ENCODE measurements at regions of chr21 and their contacts with region 1.

Region 1: DNA sequence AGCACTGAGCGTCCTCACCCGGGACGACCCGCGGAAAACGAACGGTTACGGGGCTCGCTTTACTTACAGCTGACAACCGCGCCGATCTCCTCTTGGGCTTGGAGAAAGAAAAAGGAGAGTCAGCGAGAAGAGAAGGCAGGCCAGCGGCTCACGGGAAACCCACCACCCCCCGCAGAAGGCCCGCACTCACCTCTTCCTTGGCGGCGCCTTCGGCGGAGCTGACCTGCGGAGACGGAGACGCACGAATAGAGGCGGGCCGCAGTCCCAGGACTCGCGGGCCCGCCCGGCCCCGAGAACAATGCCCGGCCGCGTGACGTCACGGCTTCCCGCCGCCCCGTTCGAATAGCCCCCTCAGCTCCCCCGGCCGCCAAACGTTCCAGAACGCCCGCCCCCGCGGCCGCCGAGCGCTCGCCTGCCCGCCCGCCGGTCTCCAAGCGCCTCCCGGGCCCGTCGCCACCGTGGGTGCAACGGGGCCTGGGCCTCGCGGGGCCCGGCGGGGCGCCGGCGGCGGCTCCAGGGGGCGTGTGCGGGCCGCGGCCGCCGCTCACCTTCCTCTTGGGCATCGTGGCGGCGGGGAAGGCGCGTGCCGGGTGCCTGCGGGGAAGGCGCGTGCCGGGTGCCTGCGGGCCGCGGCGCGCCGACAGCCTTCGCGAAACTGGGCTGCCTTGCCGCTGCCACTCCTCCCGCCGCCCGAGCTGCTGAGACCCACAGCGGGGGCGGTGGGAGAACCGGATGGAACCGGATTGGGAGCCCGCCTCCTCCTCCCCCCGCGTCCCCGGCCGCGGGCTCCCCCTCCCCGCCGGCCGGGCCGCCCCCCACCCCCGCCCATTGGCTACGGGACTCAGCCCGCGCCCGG is at the start of gene HMGN1:
- DNase-seq: peak; percentile 32 to 92 (median 84)
- ATAC-seq: peak; percentile 35 to 68 (median 68)
- H3K4me3 ChIP-seq: peak within 1 kb of the TSS; percentile 68 to 99
- H3K4me3 Mint-ChIP-seq: peak within 1 kb of the TSS; percentile 84 to 96 (median 94)
- H3K27ac ChIP-seq: peak within 1 kb of the TSS; percentile 69
- H3K27ac Mint-ChIP-seq: peak within 1 kb of the TSS; percentile 98
- H3K4me1 ChIP-seq: peaks cover 12 to 23% of the 10 kb centered on the region in 2 experiments
- H3K4me1 Mint-ChIP-seq: peaks cover 38 to 46% (median 43%) of the 10 kb centered on the region in 3 donors
- H3K27me3 ChIP-seq: no peaks in the 10 kb centered on the region
- H3K27me3 Mint-ChIP-seq: peaks cover 0 to 2% of the 10 kb centered on the region in 2 donors
- total RNA-seq, gene HMGN1: 206 to 254 (median 239) TPM

Region 2: GRCh38 chr21:39071623-39072214 is 276.9 kb before region 1 on chr21:
- CTCF ChIA-PET with region 1: no interaction called
- POLR2A ChIA-PET with region 1: no interaction called
- DNase-seq: no peak
- ATAC-seq: no peak
- H3K4me3 ChIP-seq: no peak overlapping the region
- H3K4me3 Mint-ChIP-seq: no peak overlapping the region
- H3K27ac ChIP-seq: no peak overlapping the region
- H3K27ac Mint-ChIP-seq: no peak overlapping the region
- H3K4me1 ChIP-seq: no peaks in the 10 kb centered on the region
- H3K4me1 Mint-ChIP-seq: no peaks in the 10 kb centered on the region
- H3K27me3 ChIP-seq: no peaks in the 10 kb centered on the region
- H3K27me3 Mint-ChIP-seq: peaks cover 1 to 3% of the 10 kb centered on the region in 2 donors

Region 3: DNA sequence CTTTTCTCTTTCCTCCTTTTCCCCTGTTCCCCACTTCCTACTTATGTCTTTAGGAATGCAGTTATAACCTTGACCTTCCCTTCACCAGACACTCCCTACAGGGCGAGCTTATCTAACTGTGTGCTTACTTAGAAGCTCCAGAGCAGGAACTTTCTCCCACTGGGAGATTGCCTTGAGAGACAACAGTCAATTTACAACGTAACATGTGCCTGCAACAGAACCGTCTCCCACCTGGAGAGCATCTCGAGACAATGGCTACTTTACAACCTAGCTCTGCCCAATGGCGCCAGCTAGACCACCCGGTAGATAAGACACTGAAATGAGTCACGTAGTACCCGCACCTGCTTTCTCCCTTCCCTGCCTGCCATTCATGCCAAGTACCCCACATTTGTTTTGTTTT is 16.4 kb before region 1 on chr21:
- CTCF ChIA-PET with region 1: no interaction called
- POLR2A ChIA-PET with region 1: interaction called in 1 of 2 experiments, 12 read pairs
- DNase-seq: no peak
- ATAC-seq: no peak
- H3K4me3 ChIP-seq: no peak overlapping the region
- H3K4me3 Mint-ChIP-seq: no peak overlapping the region
- H3K27ac ChIP-seq: no peak overlapping the region
- H3K27ac Mint-ChIP-seq: no peak overlapping the region
- H3K4me1 ChIP-seq: no peaks in the 10 kb centered on the region
- H3K4me1 Mint-ChIP-seq: no peaks in the 10 kb centered on the region
- H3K27me3 ChIP-seq: no peaks in the 10 kb centered on the region
- H3K27me3 Mint-ChIP-seq: peaks cover 0 to 3% of the 10 kb centered on the region in 2 donors

Region 4: DNA sequence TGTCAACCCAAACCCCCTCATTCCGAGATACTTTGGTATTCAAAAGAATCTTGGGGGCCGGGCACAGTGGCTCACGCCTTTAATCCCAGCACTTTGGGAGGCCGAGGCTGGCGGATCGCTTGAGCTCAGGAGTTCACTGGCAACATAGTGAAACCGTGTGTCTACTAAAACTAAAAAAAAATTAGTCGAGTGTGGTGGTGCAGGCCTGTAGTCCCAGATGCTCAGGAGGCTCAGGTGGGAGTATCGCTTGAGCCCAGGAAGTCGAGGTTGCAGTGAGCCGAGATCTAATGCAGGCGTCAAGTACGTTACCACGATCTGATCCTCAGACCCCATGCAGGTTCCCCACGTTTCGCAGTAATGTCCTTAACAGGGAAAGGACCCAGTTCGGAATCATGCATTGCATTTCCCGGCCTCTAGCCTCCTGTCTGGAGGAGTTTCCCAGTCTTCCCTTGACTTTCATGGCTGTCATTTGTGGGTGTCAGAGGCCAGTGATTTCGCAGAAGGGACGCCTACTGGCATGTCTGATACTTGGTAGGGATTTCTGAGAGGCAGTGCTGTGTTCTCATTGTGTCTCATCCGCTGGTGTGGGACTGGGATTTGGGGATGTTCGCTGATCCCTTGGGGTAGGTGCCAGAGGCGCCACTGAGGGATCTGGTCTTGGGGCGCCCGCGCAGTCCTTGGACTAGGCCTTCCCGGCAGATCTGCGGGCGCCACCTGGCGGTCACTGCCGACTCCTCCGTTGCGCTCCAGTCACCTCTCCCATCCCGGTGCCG is 39.6 kb after region 1 on chr21:
- CTCF ChIA-PET with region 1: interaction called, 3 to 10 read pairs
- POLR2A ChIA-PET with region 1: interaction called in 1 of 2 experiments, 4 read pairs
- DNase-seq: peak; percentile 53 to 92 (median 82)
- ATAC-seq: peak; percentile 80 to 82 (median 81)
- H3K4me3 ChIP-seq: peak overlapping the region; percentile 53 to 67
- H3K4me3 Mint-ChIP-seq: peak overlapping the region; percentile 81 to 85 (median 84)
- H3K27ac ChIP-seq: peak overlapping the region; percentile 60
- H3K27ac Mint-ChIP-seq: peak overlapping the region; percentile 87 to 94
- H3K4me1 ChIP-seq: peaks cover 14 to 33% of the 10 kb centered on the region in 2 experiments
- H3K4me1 Mint-ChIP-seq: peaks cover 28 to 37% (median 32%) of the 10 kb centered on the region in 3 donors
- H3K27me3 ChIP-seq: no peaks in the 10 kb centered on the region
- H3K27me3 Mint-ChIP-seq: no peaks in the 10 kb centered on the region

Measured in T-cell (primary cell).